ENCODE measurements at regions of chr20 and their contacts with region 1.

Region 1: GRCh38 chr20:31562241-31562640 is 42.8 kb upstream of the ID1 start:
- DNase-seq: no peak
- H3K4me3 ChIP-seq: no peak overlapping the region
- H3K27ac ChIP-seq: peak overlapping the region in 2 of 3 donors; percentile 8 to 92
- H3K4me1 ChIP-seq: peaks cover 30 to 55% of the 10 kb centered on the region in 2 donors
- H3K27me3 ChIP-seq: no peaks in the 10 kb centered on the region
- CTCF ChIP-seq: no peak
- POLR2A ChIP-seq: no peak

Region 2: GRCh38 chr20:31494131-31494530 is 68.1 kb before region 1 on chr20:
- intact Hi-C with region 1: no loop called
- DNase-seq: no peak
- H3K4me3 ChIP-seq: no peak overlapping the region
- H3K27ac ChIP-seq: no peak overlapping the region
- H3K4me1 ChIP-seq: peaks cover 0 to 15% of the 10 kb centered on the region in 2 donors
- H3K27me3 ChIP-seq: no peaks in the 10 kb centered on the region
- CTCF ChIP-seq: no peak
- POLR2A ChIP-seq: no peak

Region 3: GRCh38 chr20:31608256-31608980 is 46.2 kb after region 1 on chr20:
- intact Hi-C with region 1: loop called (anchors 2 kb)
- DNase-seq: peak; percentile 99
- H3K4me3 ChIP-seq: peak overlapping the region in 1 of 3 donors; percentile 90
- H3K27ac ChIP-seq: peak overlapping the region; percentile 97 to 99 (median 98)
- H3K4me1 ChIP-seq: peaks cover 51 to 52% of the 10 kb centered on the region in 2 donors
- H3K27me3 ChIP-seq: no peaks in the 10 kb centered on the region
- CTCF ChIP-seq: peak in 1 of 6 experiments; percentile 6
- POLR2A ChIP-seq: peak; percentile 31 to 91